Dorsolateral prefrontal cortex (tissue), 120 donors: ENCODE measurements at regions of chr22 and their contacts with region 1.

Region 1: DNA sequence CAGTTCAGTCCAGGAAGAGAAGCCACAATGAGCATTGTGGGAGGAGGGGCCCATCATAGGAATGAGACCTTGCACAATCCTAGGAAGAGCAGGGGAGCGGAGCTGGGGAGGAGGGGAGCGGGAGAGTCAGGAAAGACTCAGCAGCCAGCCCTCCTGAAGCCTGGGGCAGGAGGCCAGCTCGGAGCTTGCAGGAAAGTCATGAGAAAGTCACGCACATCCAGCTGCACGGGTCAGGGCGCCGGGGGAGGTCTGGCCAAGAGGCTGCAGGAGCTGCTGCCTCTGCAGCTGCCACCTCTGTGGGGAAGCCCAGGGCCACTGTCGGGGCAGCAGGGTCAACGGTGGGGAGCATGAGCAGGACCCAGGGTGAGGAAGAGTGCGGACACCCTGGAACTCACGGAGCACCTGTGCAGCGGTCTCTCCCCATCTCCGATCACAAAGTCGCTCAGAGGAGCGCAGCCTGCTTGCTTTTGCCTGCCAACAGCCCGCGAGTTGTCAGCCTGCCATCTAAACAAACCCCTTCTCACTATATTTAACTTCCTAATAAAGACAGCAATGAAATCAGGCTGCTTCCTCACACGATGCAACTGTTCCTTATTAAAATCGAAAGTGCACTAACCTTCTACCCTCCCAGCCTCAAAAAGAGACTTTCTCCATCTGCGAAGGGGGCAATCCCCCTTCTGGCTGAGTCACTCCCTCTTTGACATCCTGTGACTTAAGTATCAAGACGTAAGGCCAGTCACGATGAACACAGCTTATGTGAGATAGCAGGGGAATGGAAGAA is 52.9 kb upstream of the RTL6 start:
- DNase-seq: peak in 1 of 10 donors; percentile 28
- H3K4me3 ChIP-seq: peak overlapping the region in 27 of 59 donors; percentile 2 to 49 (median 27)
- H3K27ac ChIP-seq: no peak overlapping the region
- H3K27me3 ChIP-seq: peaks cover 0 to 32% (median 0%) of the 10 kb centered on the region in 45 donors
- CTCF ChIP-seq: no peak

Region 2: GRCh38 chr22:44526779-44527126 is 24.1 kb before region 1 on chr22:
- intact Hi-C with region 1: loop called in 1 of 2 experiments (anchors 2 kb)
- DNase-seq: no peak
- H3K4me3 ChIP-seq: no peak overlapping the region
- H3K27ac ChIP-seq: no peak overlapping the region
- H3K27me3 ChIP-seq: peaks cover 0 to 27% (median 0%) of the 10 kb centered on the region in 45 donors
- CTCF ChIP-seq: no peak

Region 3: DNA sequence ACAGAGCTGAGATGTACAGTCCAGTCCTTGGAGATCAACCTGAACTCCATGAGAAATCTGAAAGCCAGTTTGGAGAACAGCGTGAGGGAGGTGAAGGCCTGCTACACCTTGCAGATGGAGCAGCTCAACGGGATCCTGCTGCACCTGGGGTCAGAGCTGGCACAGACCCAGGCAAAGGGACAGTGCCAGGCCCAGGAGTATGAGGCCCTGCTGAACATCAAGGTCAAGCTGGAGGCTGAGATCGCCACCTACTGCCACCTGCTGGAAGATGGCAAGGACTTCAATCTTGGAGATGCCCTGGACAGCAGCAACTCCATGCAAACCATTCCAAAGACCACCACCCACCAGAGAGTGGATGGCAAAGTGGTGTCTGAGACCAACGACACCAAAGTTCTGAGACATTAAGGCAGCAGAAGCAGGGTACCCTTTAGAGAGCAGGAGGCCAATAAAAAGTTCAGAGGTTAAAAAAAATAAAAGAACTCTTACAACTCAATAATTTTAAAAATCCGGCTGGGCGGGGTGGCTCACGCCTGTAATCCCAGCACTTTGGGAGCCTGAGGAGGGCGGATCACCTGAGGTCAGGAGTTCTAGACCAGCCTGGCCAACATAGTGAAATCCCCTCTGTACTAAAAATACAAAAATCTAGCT is 17.1 kb after region 1 on chr22:
- intact Hi-C with region 1: no loop called
- DNase-seq: peak in 3 of 10 donors; percentile 31 to 40 (median 38)
- H3K4me3 ChIP-seq: no peak overlapping the region
- H3K27ac ChIP-seq: no peak overlapping the region
- H3K27me3 ChIP-seq: peaks cover 0 to 15% (median 0%) of the 10 kb centered on the region in 45 donors
- CTCF ChIP-seq: peak in 35 of 56 donors; percentile 4 to 47 (median 23)

Region 4: DNA sequence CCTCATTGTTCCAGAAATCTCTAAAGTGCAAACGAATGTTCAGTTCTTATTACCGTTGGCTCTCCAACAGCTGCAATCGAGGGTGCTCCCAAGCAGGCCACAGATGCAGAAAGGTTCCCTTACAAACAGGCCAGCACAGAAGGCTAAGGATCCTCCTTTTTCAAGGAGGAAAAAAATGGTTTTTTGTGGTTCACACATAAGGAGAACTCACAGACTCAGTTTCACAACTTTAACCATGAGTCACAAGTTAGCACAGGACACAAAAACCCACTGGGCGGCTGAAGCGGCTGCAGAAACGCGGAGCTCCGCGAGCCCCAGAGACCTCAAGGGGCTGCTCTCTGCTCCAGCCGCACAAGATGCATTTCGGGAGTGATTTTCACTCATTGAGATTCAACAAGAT is 52.9 kb after region 1 on chr22:
- intact Hi-C with region 1: loop called in 1 of 2 experiments (anchors 5 kb)
- DNase-seq: no peak
- H3K4me3 ChIP-seq: no peak overlapping the region
- H3K27ac ChIP-seq: no peak overlapping the region
- H3K27me3 ChIP-seq: peaks cover 0 to 20% (median 0%) of the 10 kb centered on the region in 45 donors
- CTCF ChIP-seq: no peak